CD14-positive monocyte (primary cell): ENCODE measurements at regions of chr2 and their contacts with region 1.

Region 1: DNA sequence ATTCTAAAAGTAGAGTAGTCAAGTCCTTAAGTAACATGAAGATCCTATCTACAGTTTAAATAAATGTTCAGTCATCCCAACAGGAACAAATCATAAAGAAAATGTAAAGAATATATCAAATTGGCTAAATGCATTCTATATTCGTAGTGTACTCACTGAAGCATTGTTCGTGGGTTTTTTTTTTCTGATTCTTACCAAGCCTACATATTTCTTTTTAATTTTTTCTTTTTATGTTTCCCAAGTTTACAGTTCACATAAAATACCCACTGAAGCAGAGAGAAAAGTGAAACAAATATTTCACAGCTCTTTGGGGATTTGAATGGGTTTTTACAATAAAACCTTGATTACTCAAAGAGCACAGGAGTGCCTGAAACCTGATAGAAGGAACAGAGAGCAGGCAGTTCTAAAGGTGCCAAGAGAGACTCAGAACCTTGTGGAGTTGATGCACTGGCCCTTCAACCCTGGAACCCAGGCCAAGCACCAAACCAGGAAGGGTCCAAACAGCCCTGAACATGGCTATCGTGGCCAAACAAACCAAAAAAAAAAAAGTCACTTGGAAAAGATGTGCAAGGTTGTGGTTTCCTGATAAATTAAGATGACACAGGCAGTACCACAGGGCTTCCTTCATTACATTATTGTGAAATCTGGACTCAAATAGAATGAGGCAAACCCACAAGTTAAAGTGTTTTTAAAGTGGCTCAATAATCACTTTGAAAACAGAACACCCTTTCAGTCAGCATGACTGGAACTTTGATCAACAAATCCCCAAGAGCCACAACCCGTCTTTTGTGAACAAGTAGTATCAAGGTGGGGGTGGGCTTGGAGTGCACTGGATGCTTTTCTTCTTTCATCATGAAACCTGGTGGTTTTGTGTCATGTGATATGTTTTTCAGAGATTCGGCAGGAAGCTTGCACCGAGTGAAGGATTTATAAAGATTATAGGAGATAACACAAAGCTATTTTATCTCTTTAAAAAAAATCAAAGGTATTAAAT is 245.0 kb upstream of the FN1 start:
- DNase-seq: peak; percentile 75 to 87 (median 86)
- H3K4me3 ChIP-seq: peak overlapping the region in 1 of 3 experiments; percentile 54
- H3K4me3 Mint-ChIP-seq: peak overlapping the region; percentile 54 to 76
- H3K27ac ChIP-seq: peak overlapping the region; percentile 57 to 73
- H3K27ac Mint-ChIP-seq: peak overlapping the region; percentile 89 to 98 (median 93)
- H3K4me1 ChIP-seq: peaks cover 61 to 75% of the 10 kb centered on the region in 2 donors
- H3K4me1 Mint-ChIP-seq: peaks cover 68% of the 10 kb centered on the region
- H3K27me3 ChIP-seq: peaks cover 0 to 4% of the 10 kb centered on the region in 2 donors
- H3K27me3 Mint-ChIP-seq: peaks cover 3 to 16% (median 4%) of the 10 kb centered on the region in 3 donors
- CTCF ChIP-seq: no peak

Region 2: GRCh38 chr2:215728504-215729087 is 47.7 kb after region 1 on chr2:
- intact Hi-C with region 1: loop called in 1 of 2 experiments (anchors 5 kb)
- DNase-seq: peak; percentile 83 to 95 (median 87)
- H3K4me3 ChIP-seq: peak overlapping the region in 1 of 3 experiments; percentile 27
- H3K4me3 Mint-ChIP-seq: peak overlapping the region in 1 of 2 donors; percentile 52
- H3K27ac ChIP-seq: peak overlapping the region; percentile 79 to 86
- H3K27ac Mint-ChIP-seq: peak overlapping the region; percentile 91 to 98 (median 93)
- H3K4me1 ChIP-seq: peaks cover 43 to 62% of the 10 kb centered on the region in 2 donors
- H3K4me1 Mint-ChIP-seq: peaks cover 54% of the 10 kb centered on the region
- H3K27me3 ChIP-seq: no peaks in the 10 kb centered on the region
- H3K27me3 Mint-ChIP-seq: peaks cover 0 to 2% (median 0%) of the 10 kb centered on the region in 3 donors
- CTCF ChIP-seq: peak; percentile 33

Region 3: DNA sequence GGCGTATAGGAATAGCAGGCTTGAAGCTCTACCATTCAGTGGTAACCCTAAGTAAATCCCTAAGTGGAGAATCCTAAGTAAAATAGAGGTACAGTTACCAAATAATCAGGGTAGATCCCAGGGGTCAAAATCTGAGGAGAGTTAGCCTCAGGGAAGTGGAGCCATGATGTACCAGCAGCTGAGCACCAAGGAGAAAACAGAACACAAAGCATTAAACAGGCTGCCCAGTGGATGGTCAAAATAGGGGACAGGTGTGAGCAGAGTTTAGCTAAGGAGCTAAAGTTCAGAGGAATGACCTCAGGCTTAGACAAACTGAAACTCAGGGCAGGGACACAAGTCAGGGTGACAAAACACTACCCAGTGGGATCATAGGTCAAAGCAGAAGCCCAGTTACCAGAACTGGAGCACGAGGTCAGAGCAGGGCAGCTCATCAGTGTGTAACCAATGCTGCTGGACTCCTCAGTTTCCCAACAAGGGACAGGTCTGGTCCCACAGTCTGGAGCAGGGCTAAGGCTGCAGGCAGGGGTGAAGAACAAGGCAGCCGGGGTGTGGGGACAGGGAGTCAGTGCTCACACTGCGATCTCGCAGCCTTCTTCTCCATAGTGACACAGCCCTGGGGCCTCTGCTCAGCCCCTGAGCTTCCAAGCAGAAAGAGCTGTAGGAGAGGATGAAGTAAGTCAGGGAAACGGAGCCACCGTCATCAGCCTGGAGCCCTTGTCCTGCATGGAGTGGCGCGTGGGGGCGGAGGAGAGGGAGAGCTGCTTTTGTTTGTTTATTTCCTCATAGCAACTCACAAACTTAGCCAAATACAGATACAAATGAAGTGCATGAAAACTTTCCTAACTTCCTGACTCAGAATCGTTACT is 68.4 kb after region 1 on chr2:
- intact Hi-C with region 1: loop called in 1 of 2 experiments (anchors 5 kb)
- DNase-seq: peak; percentile 78 to 83 (median 81)
- H3K4me3 ChIP-seq: no peak overlapping the region
- H3K4me3 Mint-ChIP-seq: peak overlapping the region in 1 of 2 donors; percentile 53
- H3K27ac ChIP-seq: peak overlapping the region; percentile 67 to 86
- H3K27ac Mint-ChIP-seq: peak overlapping the region; percentile 89 to 98 (median 97)
- H3K4me1 ChIP-seq: peaks cover 46 to 57% of the 10 kb centered on the region in 2 donors
- H3K4me1 Mint-ChIP-seq: peaks cover 62% of the 10 kb centered on the region
- H3K27me3 ChIP-seq: no peaks in the 10 kb centered on the region
- H3K27me3 Mint-ChIP-seq: peaks cover 0 to 23% (median 16%) of the 10 kb centered on the region in 3 donors
- CTCF ChIP-seq: no peak